Ascending aorta (tissue), 2 donors: ENCODE measurements at regions of chr20 and their contacts with region 1.

Region 1: DNA sequence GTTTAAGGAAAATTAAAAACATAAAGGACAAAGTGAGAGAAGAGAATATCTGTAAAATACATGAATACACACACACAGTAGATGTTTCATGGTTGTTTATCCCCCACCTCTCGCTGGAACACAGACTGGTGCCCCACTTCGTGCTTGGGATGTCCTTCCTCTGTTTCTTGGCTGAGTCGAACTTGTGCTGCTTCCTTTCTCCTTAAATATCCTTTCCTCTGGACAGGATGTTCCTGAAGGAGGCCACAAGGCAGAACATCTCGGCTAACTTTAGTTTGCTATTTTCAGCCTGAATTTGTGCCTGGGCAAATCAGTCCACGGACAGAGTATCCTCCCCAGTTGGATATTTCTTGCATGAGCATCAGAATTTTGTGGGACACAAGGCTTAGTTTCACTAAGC is 54.7 kb upstream of the ZMYND8 start:
- DNase-seq: no peak
- H3K4me3 ChIP-seq: no peak overlapping the region
- H3K27ac ChIP-seq: peak overlapping the region; percentile 12 to 27
- H3K4me1 ChIP-seq: peaks cover 0 to 5% of the 10 kb centered on the region in 2 donors
- H3K27me3 ChIP-seq: no peaks in the 10 kb centered on the region
- CTCF ChIP-seq: no peak

Region 2: GRCh38 chr20:47205577-47206498 is 205.3 kb before region 1 on chr20:
- intact Hi-C with region 1: no loop called
- DNase-seq: peak in 1 of 2 donors; percentile 82
- H3K4me3 ChIP-seq: no peak overlapping the region
- H3K27ac ChIP-seq: no peak overlapping the region
- H3K4me1 ChIP-seq: no peaks in the 10 kb centered on the region
- H3K27me3 ChIP-seq: no peaks in the 10 kb centered on the region
- CTCF ChIP-seq: peak; percentile 57 to 65 (median 60)

Region 3: DNA sequence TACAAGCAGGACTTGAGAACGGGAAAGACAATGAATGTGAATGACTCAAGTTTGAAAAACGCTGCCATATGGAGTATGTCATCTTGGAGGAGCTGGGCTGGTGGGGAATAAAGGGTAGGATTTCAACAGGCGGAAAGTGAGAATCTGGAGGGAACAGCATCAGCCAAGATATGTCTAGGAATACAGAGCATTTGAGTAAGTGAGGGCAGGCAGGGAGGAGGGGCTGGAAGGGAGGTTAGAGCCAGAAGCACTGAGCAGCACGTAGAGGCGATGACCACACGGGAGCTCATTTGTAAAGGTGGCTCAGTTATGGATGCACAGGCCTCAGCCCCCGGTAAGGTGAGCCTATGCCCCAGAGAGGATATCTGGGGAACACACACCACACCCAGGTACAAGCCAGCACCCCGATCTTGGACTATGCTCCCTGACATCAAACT is 169.8 kb before region 1 on chr20:
- intact Hi-C with region 1: no loop called
- DNase-seq: no peak
- H3K4me3 ChIP-seq: no peak overlapping the region
- H3K27ac ChIP-seq: no peak overlapping the region
- H3K4me1 ChIP-seq: no peaks in the 10 kb centered on the region
- H3K27me3 ChIP-seq: no peaks in the 10 kb centered on the region
- CTCF ChIP-seq: no peak

Region 4: GRCh38 chr20:47334022-47334551 is 77.1 kb before region 1 on chr20:
- intact Hi-C with region 1: no loop called
- DNase-seq: peak in 1 of 2 donors; percentile 75
- H3K4me3 ChIP-seq: peak overlapping the region in 1 of 2 donors; percentile 9
- H3K27ac ChIP-seq: peak overlapping the region; percentile 82 to 84
- H3K4me1 ChIP-seq: peaks cover 7 to 55% of the 10 kb centered on the region in 2 donors
- H3K27me3 ChIP-seq: no peaks in the 10 kb centered on the region
- CTCF ChIP-seq: no peak

Region 5: GRCh38 chr20:47453142-47453782 is 42.1 kb after region 1 on chr20:
- intact Hi-C with region 1: loop called (anchors 5 kb)
- DNase-seq: peak in 1 of 2 donors; percentile 70
- H3K4me3 ChIP-seq: no peak overlapping the region
- H3K27ac ChIP-seq: peak overlapping the region; percentile 57 to 59
- H3K4me1 ChIP-seq: peaks cover 0 to 4% of the 10 kb centered on the region in 2 donors
- H3K27me3 ChIP-seq: no peaks in the 10 kb centered on the region
- CTCF ChIP-seq: no peak

Region 6: DNA sequence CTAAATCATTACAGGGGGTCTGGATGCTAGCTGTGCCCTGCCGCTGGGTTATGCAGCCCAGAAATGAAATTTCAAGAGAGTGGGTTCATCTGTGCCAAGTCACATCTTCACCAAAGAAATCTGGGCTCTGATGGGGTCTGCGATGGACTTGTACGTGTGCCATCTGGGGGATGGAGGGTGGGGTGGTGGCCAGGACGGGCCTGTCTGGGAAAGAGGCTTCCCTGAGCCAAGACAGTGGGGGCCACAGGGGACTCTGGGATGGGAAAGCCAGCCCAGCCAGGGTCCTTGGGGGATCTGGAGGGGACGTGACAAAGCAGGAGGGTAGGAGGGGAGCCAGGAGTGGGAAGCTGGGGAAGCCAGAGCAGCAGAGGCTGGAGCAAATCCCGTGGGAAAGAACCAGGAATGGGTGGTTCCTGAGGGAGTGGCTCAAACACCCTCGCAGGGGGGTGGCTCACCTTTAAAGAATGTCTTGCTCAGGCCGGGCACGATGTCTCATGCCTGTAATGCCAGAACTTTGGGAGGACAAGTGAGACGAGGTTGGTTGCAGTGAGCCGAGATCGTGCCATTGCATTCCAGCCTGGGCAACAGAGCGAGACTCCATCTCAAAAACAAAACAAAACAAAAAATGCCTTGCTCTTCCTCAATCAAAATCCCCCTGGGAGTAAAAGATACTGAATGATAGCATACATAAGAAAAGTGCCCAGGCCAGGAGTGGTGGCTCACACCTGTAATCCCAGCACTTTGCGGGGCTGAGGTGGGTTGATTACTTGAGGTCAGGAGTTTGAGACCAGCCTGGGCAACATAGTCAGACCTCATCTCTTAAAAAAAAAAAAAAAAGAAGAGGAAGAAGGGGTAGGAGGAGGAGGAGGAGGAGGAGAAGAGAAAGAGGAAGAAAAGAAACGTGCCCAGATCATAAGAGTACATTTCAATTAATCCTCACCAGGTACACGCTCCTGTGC is 410.6 kb after region 1 on chr20:
- intact Hi-C with region 1: no loop called
- DNase-seq: no peak
- H3K4me3 ChIP-seq: no peak overlapping the region
- H3K27ac ChIP-seq: no peak overlapping the region
- H3K4me1 ChIP-seq: no peaks in the 10 kb centered on the region
- H3K27me3 ChIP-seq: no peaks in the 10 kb centered on the region
- CTCF ChIP-seq: no peak